ENCODE measurements at regions of chr3 and their contacts with region 1.

Region 1: DNA sequence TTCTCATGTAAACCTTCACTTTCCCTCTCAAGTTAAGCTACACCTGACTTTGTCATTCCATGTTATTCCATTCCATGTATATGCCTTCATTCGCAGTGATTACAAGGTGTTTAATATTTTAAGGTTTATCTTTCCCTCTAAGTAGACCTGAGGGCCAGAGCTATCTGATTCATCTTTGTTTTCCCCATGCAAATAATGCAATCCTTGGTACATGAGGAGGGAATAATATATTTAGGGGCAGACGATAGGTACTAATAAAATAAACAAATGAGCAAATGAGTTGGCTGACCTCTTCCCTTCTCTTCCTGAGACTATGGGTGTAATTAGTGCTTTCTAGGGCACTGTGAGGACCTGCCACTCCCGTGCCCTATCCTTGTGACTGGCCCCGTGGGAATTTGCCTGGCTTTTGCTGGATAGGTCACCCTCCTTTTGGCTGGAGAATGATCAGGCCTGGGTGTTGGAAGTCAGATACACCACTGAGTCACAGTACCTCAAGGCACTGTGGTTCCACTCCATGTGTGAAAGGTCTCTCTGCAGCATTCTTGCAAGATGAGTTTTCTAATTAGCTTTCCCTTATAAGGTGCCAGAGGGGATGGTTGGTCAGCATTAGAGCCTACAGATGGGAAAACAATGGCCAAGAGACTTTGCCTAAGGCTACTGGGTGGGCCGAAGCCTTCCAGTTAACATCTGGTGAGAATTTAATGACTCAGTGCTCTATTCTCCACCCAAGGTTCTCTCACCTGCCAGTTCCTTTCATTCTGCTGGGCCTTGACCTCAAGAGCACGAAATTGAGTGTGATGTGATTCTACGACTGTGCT is 183.2 kb downstream of the P3H2 start:
- DNase-seq: peak; percentile 98 to 100
- H3K4me3 ChIP-seq: peak overlapping the region; percentile 10; the same call in 1 of the 2 replicates
- H3K27ac ChIP-seq: peak overlapping the region; percentile 98
- H3K4me1 ChIP-seq: peaks cover 54% of the 10 kb centered on the region
- H3K27me3 ChIP-seq: no peaks in the 10 kb centered on the region
- CTCF ChIP-seq: no peak

Region 2: GRCh38 chr3:188916934-188917401 is 1020.5 kb before region 1 on chr3:
- CTCF ChIA-PET with region 1: no interaction called
- POLR2A ChIA-PET with region 1: no interaction called
- intact Hi-C with region 1: no loop called
- DNase-seq: no peak
- H3K4me3 ChIP-seq: no peak overlapping the region
- H3K27ac ChIP-seq: no peak overlapping the region
- H3K4me1 ChIP-seq: no peaks in the 10 kb centered on the region
- H3K27me3 ChIP-seq: no peaks in the 10 kb centered on the region
- CTCF ChIP-seq: no peak

Region 3: GRCh38 chr3:189304446-189305351 is 632.8 kb before region 1 on chr3:
- CTCF ChIA-PET with region 1: no interaction called
- POLR2A ChIA-PET with region 1: interaction called, 4 read pairs
- intact Hi-C with region 1: loop called (anchors 1 kb)
- DNase-seq: peak; percentile 93 to 99
- H3K4me3 ChIP-seq: peak overlapping the region; percentile 27; the same call in 1 of the 2 replicates
- H3K27ac ChIP-seq: peak overlapping the region; percentile 85
- H3K4me1 ChIP-seq: peaks cover 44% of the 10 kb centered on the region
- H3K27me3 ChIP-seq: no peaks in the 10 kb centered on the region
- CTCF ChIP-seq: no peak

Region 4: GRCh38 chr3:189394599-189395121 is 542.9 kb before region 1 on chr3:
- CTCF ChIA-PET with region 1: no interaction called
- POLR2A ChIA-PET with region 1: no interaction called
- intact Hi-C with region 1: loop called (anchors 1 kb)
- DNase-seq: no peak
- H3K4me3 ChIP-seq: no peak overlapping the region
- H3K27ac ChIP-seq: peak overlapping the region; percentile 89
- H3K4me1 ChIP-seq: peaks cover 36% of the 10 kb centered on the region
- H3K27me3 ChIP-seq: no peaks in the 10 kb centered on the region
- CTCF ChIP-seq: no peak

Region 5: DNA sequence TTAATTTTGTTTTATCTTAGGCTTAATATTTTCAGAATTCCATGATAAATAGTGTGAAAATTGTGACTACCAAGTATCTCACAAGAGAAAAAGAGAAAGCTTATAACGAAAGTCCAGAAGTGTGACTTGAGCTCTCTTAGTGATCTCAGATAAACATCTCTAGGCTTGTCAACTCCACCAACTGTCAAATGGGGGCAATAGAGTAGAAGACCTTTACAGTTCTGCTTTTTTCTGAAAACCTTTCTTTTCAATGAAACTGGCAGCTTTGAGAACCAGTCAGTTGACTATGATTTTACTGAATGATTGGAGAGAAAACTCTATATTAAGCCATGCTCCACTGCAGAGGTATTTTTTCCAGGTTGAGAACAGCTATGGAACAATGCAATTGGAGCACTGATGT is 425.5 kb before region 1 on chr3:
- CTCF ChIA-PET with region 1: no interaction called
- POLR2A ChIA-PET with region 1: interaction called, 5 read pairs
- intact Hi-C with region 1: loop called (anchors 5 kb)
- DNase-seq: no peak
- H3K4me3 ChIP-seq: no peak overlapping the region
- H3K27ac ChIP-seq: peak overlapping the region; percentile 61; the same call in 1 of the 2 replicates
- H3K4me1 ChIP-seq: peaks cover 27% of the 10 kb centered on the region
- H3K27me3 ChIP-seq: no peaks in the 10 kb centered on the region
- CTCF ChIP-seq: no peak

Region 6: DNA sequence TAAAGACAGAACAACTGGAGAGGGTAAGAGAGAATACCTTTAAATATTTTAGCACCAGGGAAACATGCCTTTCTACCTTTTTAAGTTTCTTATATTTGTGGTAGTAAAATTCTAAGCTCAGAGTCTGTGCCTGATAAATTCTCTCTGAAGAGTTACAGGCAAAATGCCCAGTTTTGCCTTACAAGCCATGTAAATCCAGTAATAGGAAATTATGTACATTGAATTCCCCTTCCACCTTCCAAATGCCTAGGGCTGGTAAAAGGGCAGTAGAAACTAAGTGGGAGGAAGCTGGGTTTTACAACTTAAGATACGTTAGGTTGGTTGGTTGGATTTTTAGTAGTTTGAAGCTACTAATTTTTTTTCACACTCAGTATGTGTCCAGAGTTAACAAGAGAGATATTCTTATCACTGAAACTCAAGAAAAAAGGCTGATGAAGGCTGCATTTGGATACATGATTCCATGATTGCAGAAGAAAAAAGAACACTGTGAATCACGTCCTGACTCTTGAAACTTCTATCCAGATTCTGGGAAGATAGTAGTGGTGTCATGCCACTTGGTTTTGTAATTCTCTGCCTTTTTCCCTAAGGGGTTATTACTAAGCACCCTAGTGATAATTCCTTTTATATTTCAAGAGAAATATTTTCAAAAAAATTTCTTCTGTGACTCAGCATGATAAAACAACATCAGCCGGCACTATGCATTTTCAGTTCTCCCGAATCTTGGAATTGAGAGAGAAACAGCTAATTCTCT is 349.3 kb before region 1 on chr3:
- CTCF ChIA-PET with region 1: no interaction called
- POLR2A ChIA-PET with region 1: no interaction called
- intact Hi-C with region 1: loop called (anchors 5 kb)
- DNase-seq: peak in 1 of 2 experiments; percentile 71
- H3K4me3 ChIP-seq: peak overlapping the region; percentile 5; the same call in 1 of the 2 replicates
- H3K27ac ChIP-seq: peak overlapping the region; percentile 86
- H3K4me1 ChIP-seq: peaks cover 25% of the 10 kb centered on the region
- H3K27me3 ChIP-seq: no peaks in the 10 kb centered on the region
- CTCF ChIP-seq: no peak

Region 7: GRCh38 chr3:189756220-189757078 is 181.1 kb before region 1 on chr3:
- CTCF ChIA-PET with region 1: no interaction called
- POLR2A ChIA-PET with region 1: no interaction called
- intact Hi-C with region 1: loop called (anchors 1 kb)
- DNase-seq: peak; percentile 58 to 100
- H3K4me3 ChIP-seq: no peak overlapping the region; the same call in 1 of the 2 replicates
- H3K27ac ChIP-seq: peak overlapping the region; percentile 93
- H3K4me1 ChIP-seq: peaks cover 40% of the 10 kb centered on the region
- H3K27me3 ChIP-seq: no peaks in the 10 kb centered on the region
- CTCF ChIP-seq: no peak

Region 8: DNA sequence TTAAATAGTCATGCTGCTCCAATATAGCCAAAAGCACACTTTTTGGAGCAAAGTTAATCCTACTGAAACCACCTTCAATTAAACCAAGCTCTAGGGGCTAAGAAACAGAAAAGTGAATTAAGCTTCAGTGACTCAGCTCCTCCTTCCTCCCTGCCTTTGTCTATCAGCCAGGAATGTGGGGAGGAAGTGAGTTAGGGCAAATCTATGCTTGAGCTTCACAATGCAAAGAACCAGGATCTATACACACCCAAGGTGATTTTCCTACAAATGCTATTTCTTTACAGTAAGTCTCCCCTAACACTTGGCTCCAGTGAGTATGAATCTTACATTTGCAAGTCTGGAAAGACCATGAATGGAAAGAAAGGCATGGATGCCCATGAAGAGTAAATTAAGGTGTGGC is 28.9 kb before region 1 on chr3:
- CTCF ChIA-PET with region 1: no interaction called
- POLR2A ChIA-PET with region 1: interaction called, 6 read pairs
- intact Hi-C with region 1: loop called (anchors 1 kb)
- DNase-seq: peak; percentile 47 to 77
- H3K4me3 ChIP-seq: peak overlapping the region; percentile 7; the same call in 1 of the 2 replicates
- H3K27ac ChIP-seq: peak overlapping the region; percentile 98
- H3K4me1 ChIP-seq: peaks cover 45% of the 10 kb centered on the region
- H3K27me3 ChIP-seq: no peaks in the 10 kb centered on the region
- CTCF ChIP-seq: no peak

Region 9: GRCh38 chr3:190064112-190064511 is 126.6 kb after region 1 on chr3:
- CTCF ChIA-PET with region 1: no interaction called
- POLR2A ChIA-PET with region 1: no interaction called
- intact Hi-C with region 1: no loop called
- DNase-seq: peak; percentile 29 to 67
- H3K4me3 ChIP-seq: no peak overlapping the region
- H3K27ac ChIP-seq: no peak overlapping the region
- H3K4me1 ChIP-seq: peaks cover 7% of the 10 kb centered on the region; the same call in 1 of the 2 replicates
- H3K27me3 ChIP-seq: no peaks in the 10 kb centered on the region
- CTCF ChIP-seq: no peak

Measured in PC-9 (cell line).